H1 (cell line): ENCODE measurements at regions of chr1 and their contacts with region 1.

Region 1: DNA sequence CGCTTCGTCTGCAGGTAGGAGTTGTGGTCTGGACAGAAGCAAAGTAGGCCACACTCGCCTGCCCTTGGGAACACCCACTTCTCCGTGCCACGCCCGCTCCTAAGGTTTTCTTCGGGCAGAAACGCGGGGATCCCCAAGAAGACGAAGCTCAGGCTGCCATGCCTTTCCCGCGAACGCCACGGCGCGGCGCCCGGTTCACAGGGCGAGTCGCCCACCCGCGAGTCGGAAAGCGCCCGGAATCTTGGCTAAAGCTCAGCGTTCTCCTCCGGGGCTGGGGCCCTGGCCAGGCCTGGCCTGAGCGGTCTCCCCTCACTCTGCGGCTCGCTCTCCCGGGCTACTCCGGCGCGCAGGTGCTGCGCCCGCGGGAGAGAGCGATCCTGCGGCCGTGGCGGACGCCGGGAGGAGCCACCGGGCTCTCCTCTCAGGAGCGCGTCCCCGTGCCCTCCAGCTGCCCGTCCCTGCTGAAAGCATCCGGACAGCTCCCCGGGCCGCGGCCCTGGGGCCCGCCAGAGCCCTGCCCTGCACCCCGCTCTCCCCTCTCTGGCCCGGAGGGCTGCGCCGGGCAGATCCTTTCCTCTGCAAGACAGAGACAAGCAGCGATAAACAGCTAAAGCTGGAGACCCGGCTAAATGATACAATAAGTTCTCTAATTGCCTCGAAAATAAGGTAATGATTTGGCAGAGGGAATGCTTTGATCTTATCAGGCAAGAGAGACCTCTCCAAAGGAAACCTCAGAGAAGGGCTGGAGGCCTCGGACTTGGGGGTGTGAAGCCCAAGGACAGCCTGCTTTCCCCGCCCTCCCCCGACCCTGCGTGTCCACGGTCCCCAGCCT is 6.7 kb upstream of the WNT2B start:
- DNase-seq: peak in 1 of 2 experiments; percentile 74
- H3K4me3 ChIP-seq: peak overlapping the region; percentile 11 to 60 (median 50)
- H3K27ac ChIP-seq: no peak overlapping the region
- H3K4me1 ChIP-seq: peaks cover 0 to 7% (median 6%) of the 10 kb centered on the region in 4 experiments; a peak in 5 of 7 replicates
- H3K27me3 ChIP-seq: peaks cover 17 to 60% (median 51%) of the 10 kb centered on the region in 4 experiments
- CTCF ChIP-seq: peak in 2 of 3 experiments; percentile 38 to 49; a peak in 2 of 4 replicates
- EP300 ChIP-seq: no peak
- POLR2A ChIP-seq: no peak
- RAD21 ChIP-seq: peak; percentile 29 to 46

Region 2: GRCh38 chr1:112454316-112454715 is 47.7 kb before region 1 on chr1:
- CTCF ChIA-PET with region 1: no interaction called
- POLR2A ChIA-PET with region 1: no interaction called
- DNase-seq: no peak
- H3K4me3 ChIP-seq: no peak overlapping the region
- H3K27ac ChIP-seq: no peak overlapping the region
- H3K4me1 ChIP-seq: no peaks in the 10 kb centered on the region; a peak in 1 of 7 replicates
- H3K27me3 ChIP-seq: no peaks in the 10 kb centered on the region
- CTCF ChIP-seq: no peak
- EP300 ChIP-seq: no peak
- POLR2A ChIP-seq: no peak
- RAD21 ChIP-seq: no peak

Region 3: GRCh38 chr1:112515311-112516009 is 13.4 kb after region 1 on chr1:
- CTCF ChIA-PET with region 1: interaction called, 28 read pairs
- POLR2A ChIA-PET with region 1: interaction called, 3 read pairs
- DNase-seq: no peak
- H3K4me3 ChIP-seq: no peak overlapping the region
- H3K27ac ChIP-seq: no peak overlapping the region
- H3K4me1 ChIP-seq: peaks cover 0 to 5% (median 1%) of the 10 kb centered on the region in 4 experiments; a peak in 3 of 7 replicates
- H3K27me3 ChIP-seq: peaks cover 7 to 26% (median 16%) of the 10 kb centered on the region in 4 experiments
- CTCF ChIP-seq: no peak
- EP300 ChIP-seq: no peak
- POLR2A ChIP-seq: no peak
- RAD21 ChIP-seq: peak in 1 of 2 experiments; percentile 8; a peak in 1 of 4 replicates

Region 4: DNA sequence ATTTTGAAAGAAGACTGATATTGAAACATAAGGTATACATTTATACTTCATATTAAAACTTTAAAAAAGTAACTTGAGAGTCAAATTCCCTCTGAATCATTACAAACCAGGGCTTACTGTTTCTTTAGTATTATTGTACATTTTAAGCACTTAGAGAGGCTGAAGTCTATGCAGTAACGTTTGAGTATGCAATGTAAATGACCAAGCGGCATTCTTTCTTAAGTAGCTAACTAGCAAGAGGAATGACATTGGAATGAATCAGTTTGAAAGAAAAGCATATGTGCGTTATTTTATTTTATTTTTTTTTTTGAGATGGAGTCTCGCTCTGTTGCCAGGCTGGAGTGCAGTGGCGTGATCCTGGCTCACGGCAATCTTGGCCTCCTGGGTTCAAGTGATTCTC is 31.0 kb after region 1 on chr1:
- CTCF ChIA-PET with region 1: interaction called, 13 read pairs
- POLR2A ChIA-PET with region 1: no interaction called
- DNase-seq: no peak
- H3K4me3 ChIP-seq: no peak overlapping the region
- H3K27ac ChIP-seq: no peak overlapping the region
- H3K4me1 ChIP-seq: no peaks in the 10 kb centered on the region
- H3K27me3 ChIP-seq: no peaks in the 10 kb centered on the region
- CTCF ChIP-seq: no peak
- EP300 ChIP-seq: no peak
- POLR2A ChIP-seq: no peak
- RAD21 ChIP-seq: no peak